ENCODE measurements at regions of chr19 and their contacts with region 1.

Region 1: GRCh38 chr19:58154679-58155648 is 4.4 kb upstream of the ZNF329 start:
- DNase-seq: peak; percentile 99
- ATAC-seq: peak; percentile 87
- H3K4me3 Mint-ChIP-seq: peak overlapping the region; percentile 71
- H3K27ac Mint-ChIP-seq: peak overlapping the region; percentile 51
- H3K4me1 Mint-ChIP-seq: peaks cover 10% of the 10 kb centered on the region
- H3K27me3 Mint-ChIP-seq: no peaks in the 10 kb centered on the region

Region 2: DNA sequence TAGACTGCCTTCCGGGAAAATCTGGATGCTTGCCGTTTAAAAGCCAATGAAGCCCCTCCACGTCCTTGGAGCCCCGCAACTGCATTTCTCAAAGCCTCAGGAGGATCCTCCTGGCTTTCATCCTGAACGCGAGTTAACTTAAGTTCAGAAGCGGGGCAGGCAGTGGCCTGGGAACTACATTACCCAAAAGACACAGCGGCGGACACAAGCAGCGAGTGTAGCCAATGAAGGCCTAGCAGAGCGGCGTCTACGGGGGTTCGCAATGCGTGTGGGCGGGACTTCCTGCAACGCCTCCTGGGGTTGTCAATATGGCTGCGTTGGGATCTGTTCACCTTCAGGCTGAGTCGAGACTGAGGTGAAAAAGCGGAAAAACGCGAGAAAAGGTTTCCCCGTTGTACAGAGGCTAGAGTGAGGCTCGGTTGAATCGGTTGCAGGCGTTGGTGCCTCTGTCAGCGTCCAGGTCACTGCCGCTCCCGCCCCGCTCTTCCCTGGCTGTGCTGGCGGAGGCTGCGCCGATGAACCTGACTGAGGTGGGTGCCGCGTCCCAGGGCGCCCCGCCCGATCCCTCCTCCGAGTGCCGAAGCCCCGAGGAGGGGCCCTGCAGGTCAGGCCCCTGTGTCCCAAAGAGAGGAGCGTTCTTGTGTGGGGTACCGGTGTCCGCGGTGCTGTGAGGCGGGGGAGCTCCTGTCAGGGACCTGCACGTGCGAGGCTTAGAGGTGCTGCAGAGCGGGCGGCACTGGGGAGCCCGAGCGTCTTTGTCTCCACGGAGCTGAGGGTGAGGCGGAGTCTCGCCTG is 743.9 kb before region 1 on chr19 and contains the start of gene ZNF17:
- CTCF ChIA-PET with region 1: no interaction called
- POLR2A ChIA-PET with region 1: no interaction called
- intact Hi-C with region 1: loop called (anchors 1 kb)
- DNase-seq: peak; percentile 96
- ATAC-seq: peak; percentile 100
- H3K4me3 Mint-ChIP-seq: peak within 1 kb of the TSS; percentile 93
- H3K27ac Mint-ChIP-seq: peak within 1 kb of the TSS; percentile 84
- H3K4me1 Mint-ChIP-seq: peaks cover 14% of the 10 kb centered on the region
- H3K27me3 Mint-ChIP-seq: no peaks in the 10 kb centered on the region
- total RNA-seq, gene ZNF17: 6.4 to 8.3 TPM

Region 3: DNA sequence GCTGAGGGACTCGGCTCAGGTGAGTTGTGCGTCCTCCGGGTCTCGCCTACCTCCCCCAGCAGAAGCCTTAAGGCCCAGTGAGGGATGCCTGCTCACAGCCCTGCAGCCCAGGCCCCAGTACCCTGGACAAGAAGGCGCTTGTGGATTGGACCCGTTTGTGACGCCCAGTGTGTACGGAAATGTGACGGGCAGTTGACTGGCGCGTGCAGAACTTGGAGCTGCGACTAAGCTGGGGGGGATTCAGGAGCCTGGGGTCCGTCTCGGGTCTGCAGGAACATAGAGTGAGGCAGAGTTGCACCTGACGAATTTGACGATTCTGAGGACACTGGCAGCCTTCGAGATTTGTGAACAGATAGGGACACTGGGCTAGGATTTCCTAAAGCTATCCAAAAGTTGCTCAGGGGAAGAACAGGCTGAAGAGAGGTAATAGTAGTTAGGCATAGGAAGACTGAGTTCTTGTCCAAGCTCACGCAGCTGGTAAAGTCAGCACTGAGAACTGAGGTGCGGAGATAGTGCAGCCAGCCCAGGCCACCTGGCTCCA is 472.7 kb before region 1 on chr19:
- CTCF ChIA-PET with region 1: no interaction called
- POLR2A ChIA-PET with region 1: no interaction called
- intact Hi-C with region 1: loop called in 1 of 2 experiments (anchors 1 kb)
- DNase-seq: no peak
- ATAC-seq: no peak
- H3K4me3 Mint-ChIP-seq: peak overlapping the region; percentile 85
- H3K27ac Mint-ChIP-seq: peak overlapping the region; percentile 93
- H3K4me1 Mint-ChIP-seq: peaks cover 31% of the 10 kb centered on the region
- H3K27me3 Mint-ChIP-seq: peaks cover under 1% of the 10 kb centered on the region

Region 4: DNA sequence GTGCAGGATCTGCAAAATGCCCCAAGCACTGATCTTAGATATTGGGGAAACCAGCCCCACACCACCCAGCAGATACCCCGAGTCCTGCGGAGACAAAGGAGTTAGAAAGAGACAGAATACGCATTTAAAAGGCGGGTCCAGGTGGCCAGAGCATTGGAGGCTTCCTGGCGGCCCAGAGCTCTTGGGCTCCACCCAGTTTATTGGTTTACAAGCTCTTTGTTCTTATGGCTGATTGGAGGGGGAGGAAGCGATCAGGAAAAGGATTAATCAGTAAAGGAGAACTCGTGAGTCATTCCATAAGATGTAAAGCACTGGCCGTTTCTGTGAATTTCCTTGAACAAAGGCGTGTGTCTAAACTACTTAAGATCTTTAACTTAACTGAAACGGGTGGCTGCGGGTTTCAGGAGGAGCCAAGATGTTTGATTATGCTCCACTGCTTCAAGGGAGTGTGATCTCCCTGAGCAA is 304.4 kb before region 1 on chr19:
- CTCF ChIA-PET with region 1: no interaction called
- POLR2A ChIA-PET with region 1: no interaction called
- intact Hi-C with region 1: loop called in 1 of 2 experiments (anchors 1 kb)
- DNase-seq: peak; percentile 33
- ATAC-seq: no peak
- H3K4me3 Mint-ChIP-seq: peak overlapping the region; percentile 95
- H3K27ac Mint-ChIP-seq: peak overlapping the region; percentile 97
- H3K4me1 Mint-ChIP-seq: peaks cover 23% of the 10 kb centered on the region
- H3K27me3 Mint-ChIP-seq: no peaks in the 10 kb centered on the region

Region 5: DNA sequence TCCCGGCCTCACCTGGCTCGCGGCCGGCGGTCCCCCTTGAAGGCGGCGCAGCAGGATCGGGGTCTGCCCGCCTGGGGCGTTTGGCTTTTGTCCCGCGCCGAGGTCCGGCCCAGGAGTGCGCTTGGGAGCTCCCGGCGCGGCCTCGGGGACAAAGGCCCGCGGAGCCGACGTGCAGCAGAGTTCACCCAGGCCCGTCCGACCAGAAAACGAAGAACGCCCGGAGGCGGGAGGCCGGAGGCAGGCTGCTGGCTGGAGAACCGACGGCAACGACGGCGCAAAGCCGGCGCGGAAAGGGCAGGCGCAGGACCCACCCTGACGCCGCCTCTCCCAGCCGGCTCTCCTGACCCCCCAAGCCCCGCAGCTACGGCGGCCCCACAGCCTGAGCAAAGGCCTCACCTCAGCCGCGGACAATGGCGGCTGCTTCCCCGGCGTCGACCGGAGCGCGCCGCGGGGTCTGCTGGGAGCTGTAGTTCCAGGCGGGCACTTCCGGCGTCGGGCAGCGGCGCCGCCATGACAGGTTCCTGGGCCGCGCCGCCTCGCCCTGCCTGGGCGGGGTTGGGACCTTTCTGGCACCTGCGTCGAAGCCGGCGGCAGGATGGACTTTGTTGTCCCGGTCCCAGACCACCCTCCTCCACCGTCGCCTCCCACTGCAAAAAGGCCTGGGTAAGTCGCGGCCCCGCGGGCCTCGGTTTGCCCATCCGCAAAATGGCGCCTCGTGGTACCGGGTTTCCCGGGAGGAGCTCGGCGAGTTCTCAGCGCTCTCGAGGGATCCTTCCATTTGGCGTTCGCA is 152.4 kb before region 1 on chr19 and contains the start of gene ZNF606:
- CTCF ChIA-PET with region 1: interaction called, 3 read pairs
- POLR2A ChIA-PET with region 1: no interaction called
- intact Hi-C with region 1: loop called in 1 of 2 experiments (anchors 1 kb)
- DNase-seq: peak; percentile 93
- ATAC-seq: peak; percentile 99
- H3K4me3 Mint-ChIP-seq: peak within 1 kb of the TSS; percentile 80
- H3K27ac Mint-ChIP-seq: peak within 1 kb of the TSS; percentile 86
- H3K4me1 Mint-ChIP-seq: peaks cover 29% of the 10 kb centered on the region
- H3K27me3 Mint-ChIP-seq: no peaks in the 10 kb centered on the region
- total RNA-seq, gene ZNF606: 6.0 to 8.9 TPM

Region 6: DNA sequence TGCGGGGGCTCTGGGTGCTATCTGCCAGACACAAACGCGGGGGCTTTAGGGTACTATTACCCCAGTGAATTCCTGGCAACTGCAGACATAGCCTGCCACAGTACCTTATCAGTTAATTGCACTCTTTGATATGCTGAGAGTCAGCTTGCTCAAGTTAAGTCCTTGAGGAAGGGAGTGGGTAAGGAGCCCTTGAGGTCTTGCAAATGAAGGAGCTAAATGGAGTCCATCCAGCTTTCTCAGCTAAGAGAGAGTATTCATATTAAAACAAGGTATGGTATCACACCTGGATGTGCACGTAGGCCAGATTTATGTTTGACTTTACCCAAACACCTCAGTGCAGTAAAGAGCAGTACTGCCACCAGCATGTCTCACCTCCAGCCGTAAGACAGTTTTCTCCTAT is 140.8 kb before region 1 on chr19:
- CTCF ChIA-PET with region 1: no interaction called
- POLR2A ChIA-PET with region 1: no interaction called
- intact Hi-C with region 1: no loop called
- DNase-seq: no peak
- ATAC-seq: no peak
- H3K4me3 Mint-ChIP-seq: no peak overlapping the region
- H3K27ac Mint-ChIP-seq: no peak overlapping the region
- H3K4me1 Mint-ChIP-seq: no peaks in the 10 kb centered on the region
- H3K27me3 Mint-ChIP-seq: no peaks in the 10 kb centered on the region

Region 7: DNA sequence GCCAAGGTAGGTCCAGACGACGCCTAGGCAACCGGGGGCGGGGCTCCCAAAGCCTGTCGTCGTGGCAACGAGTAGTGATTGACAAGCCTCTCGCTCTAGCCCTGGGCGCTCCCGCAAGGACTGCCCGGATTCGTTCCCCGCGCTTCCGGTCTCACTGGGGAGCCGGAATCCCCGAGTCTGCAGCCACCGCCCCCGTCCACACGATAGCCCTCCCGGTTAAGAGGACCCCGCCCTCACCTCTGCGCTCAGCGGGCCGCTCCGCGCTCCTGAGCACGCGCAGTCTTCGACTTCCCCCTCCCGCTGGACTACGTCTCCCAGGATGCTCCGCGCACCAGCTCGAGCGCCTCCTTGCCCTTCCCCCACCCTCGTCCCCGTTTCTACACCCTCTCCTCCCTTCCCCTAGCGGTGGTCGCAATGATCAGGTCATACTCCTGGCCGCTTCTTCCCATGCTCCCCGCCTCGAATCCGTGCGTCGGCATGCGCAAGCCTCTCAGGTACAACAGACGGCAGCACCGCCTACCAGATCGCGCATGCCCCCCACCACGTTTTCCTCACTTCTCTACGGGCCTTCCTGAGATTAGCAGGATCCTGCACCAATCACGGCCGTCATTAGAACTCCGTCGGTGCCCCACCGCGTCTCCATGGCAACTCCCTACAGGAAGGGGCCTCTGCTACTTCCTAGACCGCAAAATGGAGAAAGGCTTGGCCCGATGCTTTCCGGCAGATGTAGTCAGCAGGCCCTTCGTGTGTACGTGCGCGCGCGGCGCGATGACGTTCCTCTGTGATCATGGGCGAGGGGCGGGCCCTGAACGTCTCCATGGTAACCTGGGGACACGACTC is 418.1 kb after region 1 on chr19 and contains the start of gene MZF1:
- CTCF ChIA-PET with region 1: no interaction called
- POLR2A ChIA-PET with region 1: no interaction called
- intact Hi-C with region 1: loop called in 1 of 2 experiments (anchors 1 kb)
- DNase-seq: peak; percentile 100
- ATAC-seq: peak; percentile 69
- H3K4me3 Mint-ChIP-seq: peak within 1 kb of the TSS; percentile 95
- H3K27ac Mint-ChIP-seq: peak within 1 kb of the TSS; percentile 100
- H3K4me1 Mint-ChIP-seq: peaks cover 38% of the 10 kb centered on the region
- H3K27me3 Mint-ChIP-seq: no peaks in the 10 kb centered on the region
- total RNA-seq, gene MZF1: 14.3 to 15.0 TPM